ENCODE measurements at regions of chr11 and their contacts with region 1.

Region 1: GRCh38 chr11:9687711-9688477 is 24.0 kb downstream of the SWAP70 start:
- DNase-seq: no peak
- H3K4me3 ChIP-seq: no peak overlapping the region
- H3K27ac ChIP-seq: peak overlapping the region; percentile 70 to 88
- H3K4me1 ChIP-seq: peaks cover 0 to 30% of the 10 kb centered on the region in 2 donors
- H3K27me3 ChIP-seq: no peaks in the 10 kb centered on the region
- CTCF ChIP-seq: no peak
- POLR2A ChIP-seq: no peak

Region 2: GRCh38 chr11:9580894-9581293 is 107.0 kb before region 1 on chr11:
- intact Hi-C with region 1: no loop called
- DNase-seq: no peak
- H3K4me3 ChIP-seq: no peak overlapping the region
- H3K27ac ChIP-seq: no peak overlapping the region
- H3K4me1 ChIP-seq: no peaks in the 10 kb centered on the region
- H3K27me3 ChIP-seq: no peaks in the 10 kb centered on the region
- CTCF ChIP-seq: no peak
- POLR2A ChIP-seq: no peak

Region 3: GRCh38 chr11:9651899-9652748 is 35.8 kb before region 1 on chr11:
- intact Hi-C with region 1: no loop called
- DNase-seq: no peak
- H3K4me3 ChIP-seq: no peak overlapping the region
- H3K27ac ChIP-seq: peak overlapping the region; percentile 55 to 60
- H3K4me1 ChIP-seq: no peaks in the 10 kb centered on the region
- H3K27me3 ChIP-seq: no peaks in the 10 kb centered on the region
- CTCF ChIP-seq: no peak
- POLR2A ChIP-seq: no peak

Region 4: DNA sequence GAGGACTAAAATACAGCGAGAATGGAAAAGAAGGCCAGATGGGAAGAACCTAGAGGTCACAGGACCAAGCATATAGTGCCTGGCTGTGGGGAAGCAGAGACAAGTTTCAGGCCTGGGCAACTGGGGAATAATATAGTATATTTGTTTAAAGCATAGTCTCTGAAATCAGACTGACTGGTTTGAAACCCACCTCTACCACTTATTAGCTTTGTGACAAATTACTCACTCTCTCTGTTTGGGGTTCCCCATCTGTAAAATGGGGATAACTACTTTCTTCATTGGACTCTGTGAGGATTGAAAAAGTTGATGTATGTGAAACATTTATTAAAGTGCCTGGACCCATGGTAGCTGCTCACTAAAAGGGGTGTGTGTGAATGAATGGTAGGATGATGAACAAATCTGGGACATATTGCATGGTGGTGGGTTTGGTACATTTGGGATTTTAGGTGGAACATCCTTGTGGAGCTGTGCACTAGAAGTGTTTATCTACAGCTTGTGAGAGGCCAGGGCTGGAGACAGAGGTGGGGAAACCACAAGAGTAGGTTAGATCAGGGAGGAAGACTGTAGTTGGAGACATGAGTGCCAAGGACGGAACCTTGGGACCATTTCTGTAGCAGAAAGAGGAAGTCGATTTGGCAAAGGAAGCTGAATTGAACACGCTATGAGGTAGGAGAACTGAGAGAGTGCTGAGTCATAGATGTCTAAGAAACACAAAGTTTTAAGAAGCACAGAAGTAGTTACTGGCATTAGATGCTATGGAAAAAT is 28.6 kb after region 1 on chr11:
- intact Hi-C with region 1: loop called (anchors 1 kb)
- DNase-seq: no peak
- H3K4me3 ChIP-seq: no peak overlapping the region
- H3K27ac ChIP-seq: peak overlapping the region; percentile 74 to 88
- H3K4me1 ChIP-seq: peaks cover 0 to 4% of the 10 kb centered on the region in 2 donors
- H3K27me3 ChIP-seq: no peaks in the 10 kb centered on the region
- CTCF ChIP-seq: no peak
- POLR2A ChIP-seq: no peak

Region 5: DNA sequence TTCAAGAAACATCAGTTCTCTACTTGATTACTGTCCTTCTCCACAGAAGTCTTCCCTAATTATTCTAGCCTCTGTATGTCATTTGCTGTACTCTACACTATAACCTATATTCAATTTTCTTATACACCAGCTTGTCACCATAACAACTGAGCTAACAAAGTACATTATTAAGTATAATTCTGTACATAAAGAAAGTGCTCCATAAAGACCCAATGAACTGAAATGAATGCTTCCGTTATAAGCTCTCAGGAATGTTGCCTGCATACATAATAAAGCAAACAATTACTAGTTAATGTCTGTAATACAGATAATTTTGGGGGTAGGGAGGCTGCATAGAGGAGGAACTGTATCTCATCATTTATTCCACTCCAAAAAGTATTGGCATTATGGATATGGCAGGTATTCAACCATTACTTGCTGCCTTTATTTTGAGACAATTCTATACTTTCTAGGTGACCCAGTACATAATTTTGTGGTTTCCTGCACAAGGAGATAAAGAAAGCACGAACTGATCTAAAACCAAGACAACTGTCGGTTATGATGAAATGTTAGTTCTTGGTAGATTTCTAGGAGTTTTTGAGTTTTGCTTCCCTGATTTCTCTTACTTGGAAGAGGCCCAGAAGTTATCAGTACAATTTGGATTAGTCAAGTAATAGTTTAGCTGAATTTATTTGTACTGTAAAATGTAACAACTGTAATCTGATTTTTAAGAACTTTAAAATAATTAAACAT is 403.6 kb after region 1 on chr11:
- intact Hi-C with region 1: no loop called
- DNase-seq: no peak
- H3K4me3 ChIP-seq: no peak overlapping the region
- H3K27ac ChIP-seq: no peak overlapping the region
- H3K4me1 ChIP-seq: no peaks in the 10 kb centered on the region
- H3K27me3 ChIP-seq: no peaks in the 10 kb centered on the region
- CTCF ChIP-seq: no peak
- POLR2A ChIP-seq: no peak